ENCODE measurements at regions of chr11 and their contacts with region 1.

Region 1: GRCh38 chr11:1262172-1263006 is 39.5 kb downstream of the MUC5B start:
- DNase-seq: peak; percentile 82
- ATAC-seq: peak; percentile 86
- H3K4me3 ChIP-seq: peak overlapping the region; percentile 53 to 83 (median 57)
- H3K27ac ChIP-seq: peak overlapping the region; percentile 65
- H3K4me1 ChIP-seq: peaks cover 27% of the 10 kb centered on the region
- H3K27me3 ChIP-seq: no peaks in the 10 kb centered on the region; a peak in 1 of 5 replicates
- CTCF ChIP-seq: no peak; the same call in 1 of the 2 replicates
- EP300 ChIP-seq: peak in 1 of 2 experiments; percentile 25; a peak in 1 of 4 replicates
- POLR2A ChIP-seq: peak; percentile 81 to 96
- RAD21 ChIP-seq: 0 out of 2 replicates have a peak, but pooled peaks have one; percentile 8

Region 2: DNA sequence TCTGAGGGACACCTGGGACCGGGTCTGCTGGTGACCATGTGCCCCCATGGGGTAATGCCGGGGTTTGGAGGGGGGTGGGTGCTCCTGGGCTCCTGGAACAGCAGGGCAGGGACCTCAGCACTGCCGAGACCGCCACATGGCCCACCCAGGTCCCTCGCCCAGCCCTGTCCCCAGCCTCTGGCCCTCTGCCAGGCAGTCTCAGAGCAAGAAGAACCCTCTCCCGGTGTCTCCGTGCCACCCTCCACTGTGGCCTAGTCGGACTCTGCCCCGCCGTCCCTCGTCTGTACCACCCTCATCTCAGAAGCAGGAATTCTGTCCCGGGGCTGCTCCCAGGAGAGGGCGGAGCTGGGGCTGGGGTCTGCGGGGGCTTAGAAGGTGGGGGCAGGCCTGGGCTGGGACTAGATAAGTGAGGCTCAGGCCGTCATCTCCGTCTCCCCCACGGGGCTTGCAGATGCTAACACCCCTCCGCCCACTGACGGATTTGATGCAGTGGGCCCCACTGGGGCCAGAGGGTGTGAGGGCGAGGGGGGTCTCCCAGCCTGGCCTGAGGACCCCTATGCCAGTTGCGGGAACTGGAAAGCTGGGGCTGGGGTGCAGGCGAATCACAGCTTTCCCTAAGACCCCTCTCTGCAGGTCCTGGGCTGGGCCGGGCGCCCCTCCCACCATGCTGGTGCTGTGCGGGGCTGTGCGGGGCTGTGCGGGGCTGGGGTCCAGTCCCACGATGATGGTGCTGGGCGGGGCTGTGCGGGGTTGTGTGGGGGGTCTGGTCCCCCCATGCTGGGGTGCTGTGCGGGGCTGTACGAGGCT is 103.5 kb before region 1 on chr11:
- CTCF ChIA-PET with region 1: no interaction called
- POLR2A ChIA-PET with region 1: no interaction called
- in situ Hi-C with region 1: no loop called
- intact Hi-C with region 1: no loop called
- DNase-seq: no peak
- ATAC-seq: no peak
- H3K4me3 ChIP-seq: no peak overlapping the region
- H3K27ac ChIP-seq: no peak overlapping the region
- H3K4me1 ChIP-seq: peaks cover 5% of the 10 kb centered on the region
- H3K27me3 ChIP-seq: peaks cover 24 to 60% of the 10 kb centered on the region in 2 experiments; a peak in 4 of 5 replicates
- CTCF ChIP-seq: no peak
- EP300 ChIP-seq: no peak
- POLR2A ChIP-seq: no peak
- RAD21 ChIP-seq: no peak

Region 3: DNA sequence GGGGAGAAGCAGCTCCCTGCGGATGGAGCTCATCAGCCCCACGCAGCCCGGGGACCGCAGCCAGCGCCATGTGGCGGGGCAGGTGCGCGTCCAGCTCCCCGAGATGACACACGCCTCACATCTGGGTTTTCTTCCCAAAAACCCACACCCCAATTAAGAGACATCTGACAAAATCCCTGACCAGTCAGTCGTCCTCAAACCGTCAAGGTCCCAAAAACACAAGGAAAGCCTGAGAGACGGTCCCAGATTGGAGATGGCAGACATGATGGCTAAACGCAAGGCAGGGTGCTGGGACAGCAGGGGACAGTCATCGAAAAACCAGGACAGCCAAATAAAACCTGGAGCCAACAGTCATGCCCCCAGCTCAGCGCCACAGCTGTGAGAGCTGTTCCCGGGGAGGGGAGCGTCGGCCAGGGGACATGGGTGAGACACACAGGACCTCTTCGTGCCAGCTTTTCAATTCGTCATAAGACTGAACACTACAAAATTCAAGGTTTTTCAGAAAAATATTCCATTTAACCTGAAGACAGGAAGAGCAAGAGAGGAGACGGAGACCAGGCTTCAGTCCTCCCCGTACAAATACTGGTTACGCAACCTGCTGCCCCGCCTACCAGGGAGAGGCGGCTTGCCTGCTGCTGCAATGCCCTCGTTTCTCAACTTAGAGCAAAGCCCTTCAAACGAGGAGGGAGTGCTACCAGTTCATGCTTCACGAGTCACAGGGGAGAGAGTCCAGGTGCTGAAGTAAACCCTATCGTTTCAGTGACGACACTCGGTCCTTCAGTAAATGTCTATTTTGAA is 36.5 kb after region 1 on chr11:
- CTCF ChIA-PET with region 1: no interaction called
- POLR2A ChIA-PET with region 1: no interaction called
- in situ Hi-C with region 1: no loop called
- intact Hi-C with region 1: loop called (anchors 2 kb)
- DNase-seq: peak; percentile 91
- ATAC-seq: peak; percentile 83
- H3K4me3 ChIP-seq: peak overlapping the region in 1 of 3 experiments; percentile 53; a peak in 1 of 6 replicates
- H3K27ac ChIP-seq: peak overlapping the region; percentile 43
- H3K4me1 ChIP-seq: peaks cover 65% of the 10 kb centered on the region
- H3K27me3 ChIP-seq: no peaks in the 10 kb centered on the region
- CTCF ChIP-seq: peak; percentile 25; the same call in 1 of the 2 replicates
- EP300 ChIP-seq: peak; percentile 59 to 69; a peak in 3 of 4 replicates
- POLR2A ChIP-seq: no peak
- RAD21 ChIP-seq: no peak

Region 4: GRCh38 chr11:1358286-1358685 is 95.9 kb after region 1 on chr11:
- CTCF ChIA-PET with region 1: no interaction called
- POLR2A ChIA-PET with region 1: no interaction called
- in situ Hi-C with region 1: no loop called
- intact Hi-C with region 1: loop called (anchors 5 kb)
- DNase-seq: no peak
- ATAC-seq: peak; percentile 67
- H3K4me3 ChIP-seq: no peak overlapping the region
- H3K27ac ChIP-seq: no peak overlapping the region
- H3K4me1 ChIP-seq: peaks cover 13% of the 10 kb centered on the region; the same call in 1 of the 2 replicates
- H3K27me3 ChIP-seq: peaks cover 2 to 70% of the 10 kb centered on the region in 2 experiments; a peak in 4 of 5 replicates
- CTCF ChIP-seq: peak; percentile 64
- EP300 ChIP-seq: no peak
- POLR2A ChIP-seq: no peak
- RAD21 ChIP-seq: no peak